ENCODE measurements at regions of chr17 and their contacts with region 1.

Region 1: GRCh38 chr17:48753794-48754499 is 25.4 kb upstream of the HOXB13 start:
- DNase-seq: no peak
- ATAC-seq: no peak
- H3K4me3 Mint-ChIP-seq: no peak overlapping the region
- H3K27ac Mint-ChIP-seq: no peak overlapping the region
- H3K4me1 Mint-ChIP-seq: peaks cover 8% of the 10 kb centered on the region
- H3K27me3 Mint-ChIP-seq: peaks cover 74% of the 10 kb centered on the region
- CTCF ChIP-seq: no peak

Region 2: GRCh38 chr17:48444516-48445247 is 309.3 kb before region 1 on chr17:
- CTCF ChIA-PET with region 1: no interaction called
- POLR2A ChIA-PET with region 1: no interaction called
- intact Hi-C with region 1: no loop called
- DNase-seq: no peak
- ATAC-seq: no peak
- H3K4me3 Mint-ChIP-seq: peak overlapping the region; percentile 28
- H3K27ac Mint-ChIP-seq: peak overlapping the region; percentile 78
- H3K4me1 Mint-ChIP-seq: peaks cover 64% of the 10 kb centered on the region
- H3K27me3 Mint-ChIP-seq: peaks cover 3% of the 10 kb centered on the region
- CTCF ChIP-seq: no peak

Region 3: GRCh38 chr17:48625495-48626244 is 128.3 kb before region 1 on chr17:
- CTCF ChIA-PET with region 1: no interaction called
- POLR2A ChIA-PET with region 1: no interaction called
- intact Hi-C with region 1: loop called (anchors 5 kb)
- DNase-seq: peak; percentile 50
- ATAC-seq: peak; percentile 71
- H3K4me3 Mint-ChIP-seq: peak overlapping the region; percentile 85
- H3K27ac Mint-ChIP-seq: no peak overlapping the region
- H3K4me1 Mint-ChIP-seq: peaks cover 16% of the 10 kb centered on the region
- H3K27me3 Mint-ChIP-seq: peaks cover 72% of the 10 kb centered on the region
- CTCF ChIP-seq: no peak

Region 4: DNA sequence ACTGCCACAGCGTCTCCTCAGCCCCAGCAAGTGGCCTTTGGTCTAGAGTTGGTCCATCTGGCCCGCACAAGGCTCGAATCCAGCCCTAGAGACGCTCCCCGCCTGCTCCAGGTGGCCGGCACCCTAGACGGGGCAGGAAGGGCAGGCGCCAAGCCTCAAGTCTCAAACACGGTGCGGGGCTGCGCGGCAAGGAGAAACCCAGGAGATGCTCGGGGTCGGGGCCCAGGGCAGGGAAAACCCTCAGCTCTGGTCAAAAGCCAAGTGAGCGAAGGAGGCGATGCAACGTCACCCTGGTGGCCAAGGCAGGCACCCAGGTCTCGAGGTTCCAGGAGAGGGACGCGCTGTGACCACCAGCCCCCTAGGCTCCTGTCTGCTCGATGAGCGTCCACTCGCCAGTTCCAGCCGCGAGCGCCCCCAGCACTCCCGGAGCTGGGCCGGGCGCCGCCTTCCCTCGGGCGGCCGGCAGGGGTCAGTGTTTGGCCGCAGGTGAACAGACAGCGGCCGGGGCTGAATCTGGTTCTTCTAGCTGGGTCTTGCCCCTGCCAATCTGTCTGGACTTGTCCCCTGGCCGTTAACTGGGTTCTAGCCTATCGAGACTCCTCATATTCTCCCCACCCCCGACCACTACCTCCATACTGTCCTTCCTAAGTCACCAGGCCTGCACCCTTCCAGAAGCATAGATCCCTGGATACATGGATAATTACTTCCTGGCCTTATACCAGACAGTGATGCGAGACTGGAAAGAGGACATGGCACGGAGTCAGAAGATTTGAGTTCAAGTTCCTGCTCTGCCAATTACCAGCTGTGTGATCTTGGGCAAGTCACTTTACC is 75.6 kb before region 1 on chr17:
- CTCF ChIA-PET with region 1: no interaction called
- POLR2A ChIA-PET with region 1: no interaction called
- intact Hi-C with region 1: no loop called
- DNase-seq: peak; percentile 67
- ATAC-seq: peak; percentile 92
- H3K4me3 Mint-ChIP-seq: peak overlapping the region; percentile 35
- H3K27ac Mint-ChIP-seq: no peak overlapping the region
- H3K4me1 Mint-ChIP-seq: peaks cover 2% of the 10 kb centered on the region
- H3K27me3 Mint-ChIP-seq: peaks cover 34% of the 10 kb centered on the region
- CTCF ChIP-seq: peak; percentile 88

Region 5: GRCh38 chr17:48731355-48731754 is 22.6 kb before region 1 on chr17:
- CTCF ChIA-PET with region 1: no interaction called
- POLR2A ChIA-PET with region 1: no interaction called
- intact Hi-C with region 1: no loop called
- DNase-seq: no peak
- ATAC-seq: no peak
- H3K4me3 Mint-ChIP-seq: no peak overlapping the region
- H3K27ac Mint-ChIP-seq: no peak overlapping the region
- H3K4me1 Mint-ChIP-seq: peaks cover 24% of the 10 kb centered on the region
- H3K27me3 Mint-ChIP-seq: peaks cover 80% of the 10 kb centered on the region
- CTCF ChIP-seq: no peak

Region 6: GRCh38 chr17:48773245-48773644 is 19.3 kb after region 1 on chr17:
- CTCF ChIA-PET with region 1: no interaction called
- POLR2A ChIA-PET with region 1: no interaction called
- intact Hi-C with region 1: no loop called
- DNase-seq: no peak
- ATAC-seq: no peak
- H3K4me3 Mint-ChIP-seq: no peak overlapping the region
- H3K27ac Mint-ChIP-seq: no peak overlapping the region
- H3K4me1 Mint-ChIP-seq: no peaks in the 10 kb centered on the region
- H3K27me3 Mint-ChIP-seq: peaks cover 41% of the 10 kb centered on the region
- CTCF ChIP-seq: no peak

Measured in activated B cell treated with CpG ODN at 0.5 μM for 24 hours (primary cell).